SK-N-SH (cell line): ENCODE measurements at regions of chr5 and their contacts with region 1.

Region 1: GRCh38 chr5:38420691-38421390 is 135.6 kb downstream of the LIFR start:
- DNase-seq: peak; percentile 67
- H3K4me3 ChIP-seq: no peak overlapping the region
- H3K27ac ChIP-seq: no peak overlapping the region
- H3K4me1 ChIP-seq: peaks cover 3 to 7% of the 10 kb centered on the region in 2 experiments; a peak in 1 of 4 replicates
- H3K27me3 ChIP-seq: no peaks in the 10 kb centered on the region
- CTCF ChIP-seq: peak; percentile 86
- EP300 ChIP-seq: no peak
- RAD21 ChIP-seq: peak; percentile 79

Region 2: GRCh38 chr5:38078161-38078560 is 342.7 kb before region 1 on chr5:
- CTCF ChIA-PET with region 1: no interaction called
- POLR2A ChIA-PET with region 1: no interaction called
- DNase-seq: no peak
- H3K4me3 ChIP-seq: no peak overlapping the region
- H3K27ac ChIP-seq: no peak overlapping the region
- H3K4me1 ChIP-seq: no peaks in the 10 kb centered on the region
- H3K27me3 ChIP-seq: peaks cover 4% of the 10 kb centered on the region; the same call in 1 of the 2 replicates
- CTCF ChIP-seq: no peak
- EP300 ChIP-seq: no peak
- RAD21 ChIP-seq: no peak

Region 3: DNA sequence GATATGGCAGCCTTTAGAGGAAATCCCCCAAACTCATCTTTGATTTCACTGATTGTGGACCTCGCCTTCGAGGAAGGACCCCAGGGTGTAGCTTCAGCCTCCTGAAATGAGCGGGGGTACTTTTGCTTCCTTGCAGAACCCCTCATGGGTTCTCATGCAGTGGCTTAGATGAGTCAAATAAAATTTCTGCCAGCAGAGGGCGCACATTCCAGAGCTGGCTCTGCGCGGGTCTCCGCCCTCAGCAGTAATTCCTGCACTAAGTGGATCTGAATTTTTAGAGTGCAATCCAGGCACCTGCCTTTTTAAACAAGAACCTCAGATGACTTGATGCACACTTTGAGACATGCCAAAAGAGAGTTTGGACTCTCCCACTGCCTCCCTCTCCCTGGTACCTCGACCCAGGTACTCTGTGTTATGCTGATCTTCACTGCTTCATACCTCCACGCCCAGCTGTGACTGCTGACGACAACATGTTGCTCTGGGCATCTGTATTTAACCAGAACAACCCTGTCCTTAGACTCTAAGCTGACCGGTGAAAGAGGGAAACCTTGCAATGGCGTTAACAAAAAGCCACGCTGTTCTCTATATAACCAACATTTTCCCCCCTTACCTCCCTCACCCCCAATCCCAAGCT is 155.2 kb before region 1 on chr5:
- CTCF ChIA-PET with region 1: interaction called, 11 read pairs
- POLR2A ChIA-PET with region 1: no interaction called
- DNase-seq: peak; percentile 67
- H3K4me3 ChIP-seq: peak overlapping the region in 1 of 2 experiments; percentile 41; a peak in 2 of 4 replicates
- H3K27ac ChIP-seq: no peak overlapping the region
- H3K4me1 ChIP-seq: peaks cover 0 to 6% of the 10 kb centered on the region in 2 experiments; a peak in 2 of 4 replicates
- H3K27me3 ChIP-seq: peaks cover 25% of the 10 kb centered on the region; the same call in 1 of the 2 replicates
- CTCF ChIP-seq: peak; percentile 83
- EP300 ChIP-seq: no peak
- RAD21 ChIP-seq: peak; percentile 65

Region 4: DNA sequence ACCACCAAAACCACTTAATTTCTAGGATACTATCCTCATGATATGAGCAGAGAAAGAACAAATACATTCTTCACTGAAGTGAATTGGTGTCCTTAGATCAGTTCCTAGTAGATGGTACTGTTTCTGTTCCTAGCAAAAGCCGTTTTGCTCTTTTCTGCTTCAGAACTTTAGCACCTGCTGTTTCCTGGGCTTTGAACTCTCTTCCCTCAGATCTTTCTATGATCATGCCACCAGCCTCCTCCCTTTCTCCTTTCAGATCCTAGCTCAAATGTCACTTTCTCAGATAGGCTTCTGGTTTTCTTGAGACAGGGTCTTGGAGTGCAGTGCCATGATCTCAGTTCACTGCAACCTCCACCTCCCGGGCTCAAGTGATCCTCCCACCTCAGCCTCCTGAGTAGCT is 44.4 kb before region 1 on chr5:
- CTCF ChIA-PET with region 1: no interaction called
- POLR2A ChIA-PET with region 1: no interaction called
- DNase-seq: no peak
- H3K4me3 ChIP-seq: no peak overlapping the region
- H3K27ac ChIP-seq: no peak overlapping the region
- H3K4me1 ChIP-seq: peaks cover 3 to 4% of the 10 kb centered on the region in 2 experiments; a peak in 2 of 4 replicates
- H3K27me3 ChIP-seq: peaks cover 18% of the 10 kb centered on the region; the same call in 1 of the 2 replicates
- CTCF ChIP-seq: no peak
- EP300 ChIP-seq: no peak
- RAD21 ChIP-seq: no peak

Region 5: DNA sequence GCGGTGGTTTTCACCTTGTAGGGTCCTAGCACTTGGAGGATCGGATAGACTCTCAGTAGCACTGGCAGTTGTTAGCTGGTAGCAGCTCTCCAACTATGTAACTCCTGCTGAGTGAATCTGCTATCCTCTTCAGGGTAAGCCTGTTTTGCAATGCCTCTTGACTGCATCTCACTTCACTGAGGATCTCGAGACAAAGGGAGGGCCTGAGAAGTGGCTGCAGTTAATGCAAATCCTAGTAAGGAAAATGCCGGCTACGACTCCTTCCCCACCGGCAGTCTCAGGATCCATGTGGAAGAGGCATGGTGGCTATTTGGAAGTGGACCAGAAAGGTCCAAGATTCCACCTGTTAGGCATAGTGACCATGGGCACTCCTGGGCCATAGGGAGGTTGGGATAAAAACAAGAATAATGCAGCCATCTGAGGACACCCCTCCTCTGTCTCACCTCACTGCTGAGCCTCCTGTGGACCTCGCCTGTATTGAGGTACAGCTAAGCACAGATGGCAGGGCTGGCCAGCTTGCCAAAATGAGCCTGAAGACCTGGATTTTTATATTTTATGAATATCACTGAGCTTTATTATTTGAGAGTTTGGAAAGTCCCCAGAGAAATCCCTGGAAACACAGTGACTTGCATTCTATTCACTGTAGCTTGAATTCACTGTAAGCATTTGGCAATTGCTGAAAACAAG is 10.4 kb before region 1 on chr5:
- CTCF ChIA-PET with region 1: interaction called, 19 read pairs
- POLR2A ChIA-PET with region 1: no interaction called
- DNase-seq: no peak
- H3K4me3 ChIP-seq: no peak overlapping the region
- H3K27ac ChIP-seq: no peak overlapping the region
- H3K4me1 ChIP-seq: no peaks in the 10 kb centered on the region
- H3K27me3 ChIP-seq: 0 out of 2 replicates have a peak, but pooled peaks cover 3% of the 10 kb centered on the region
- CTCF ChIP-seq: no peak
- EP300 ChIP-seq: no peak
- RAD21 ChIP-seq: no peak

Region 6: DNA sequence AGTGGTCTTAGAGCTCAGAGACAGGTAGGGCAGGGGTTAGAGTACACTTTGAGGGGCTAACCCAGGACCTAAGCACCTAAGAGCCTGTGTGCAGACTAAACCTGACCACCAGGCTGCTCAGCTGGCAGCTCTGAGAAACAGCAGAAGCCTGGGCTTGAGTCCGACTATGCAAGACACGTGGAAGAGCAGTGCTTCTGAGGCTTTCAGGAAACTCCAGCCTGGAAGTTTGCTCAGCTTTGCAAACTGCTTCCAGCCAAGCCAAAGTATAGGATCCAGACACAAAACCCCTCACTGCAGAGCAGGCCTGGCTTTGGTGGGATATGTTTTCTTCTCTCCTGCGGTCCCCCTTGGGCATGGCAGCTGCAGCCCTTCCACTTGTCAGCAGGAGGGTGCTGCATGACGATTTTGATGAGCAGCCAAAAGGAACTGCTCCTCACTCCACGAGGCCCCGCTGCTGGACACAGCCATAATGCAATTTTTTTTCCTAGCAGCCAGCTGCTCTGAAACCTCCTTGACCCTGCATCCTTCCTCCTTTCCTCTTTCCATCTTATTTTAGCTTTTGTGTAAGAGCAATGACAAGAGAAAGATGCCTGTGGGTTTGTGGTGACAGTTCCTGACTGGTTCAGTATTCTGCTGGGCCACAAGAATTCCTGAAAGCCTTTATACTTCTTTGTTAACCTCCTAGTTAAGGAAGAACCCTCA is 12.5 kb after region 1 on chr5:
- CTCF ChIA-PET with region 1: interaction called, 33 read pairs
- POLR2A ChIA-PET with region 1: no interaction called
- DNase-seq: no peak
- H3K4me3 ChIP-seq: no peak overlapping the region
- H3K27ac ChIP-seq: peak overlapping the region in 1 of 2 experiments; percentile 25; a peak in 1 of 4 replicates
- H3K4me1 ChIP-seq: peaks cover 10% of the 10 kb centered on the region in 2 experiments; a peak in 2 of 4 replicates
- H3K27me3 ChIP-seq: no peaks in the 10 kb centered on the region
- CTCF ChIP-seq: no peak
- EP300 ChIP-seq: no peak
- RAD21 ChIP-seq: no peak

Region 7: DNA sequence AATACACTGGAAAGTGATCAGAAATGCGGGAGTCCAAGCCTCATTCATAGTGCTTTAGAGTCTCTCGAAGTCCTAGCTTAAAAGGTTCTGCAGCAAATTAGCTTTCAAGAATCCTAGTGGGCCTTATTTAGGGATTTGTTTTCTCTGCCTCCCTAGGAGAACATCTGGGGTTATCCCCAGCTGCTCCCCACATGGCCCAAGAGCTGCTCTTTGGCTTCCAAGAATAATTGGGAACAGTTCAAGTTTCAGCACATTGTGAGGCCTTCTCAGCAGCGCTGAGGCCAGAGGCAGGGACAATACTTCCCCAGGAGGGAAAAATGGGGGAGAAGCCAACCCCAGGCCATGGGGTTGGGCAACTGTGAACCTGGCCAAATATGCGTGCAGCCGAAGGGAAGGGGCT is 26.9 kb after region 1 on chr5:
- CTCF ChIA-PET with region 1: interaction called, 104 read pairs
- POLR2A ChIA-PET with region 1: no interaction called
- DNase-seq: no peak
- H3K4me3 ChIP-seq: no peak overlapping the region
- H3K27ac ChIP-seq: no peak overlapping the region
- H3K4me1 ChIP-seq: peaks cover 0 to 5% of the 10 kb centered on the region in 2 experiments; a peak in 1 of 4 replicates
- H3K27me3 ChIP-seq: no peaks in the 10 kb centered on the region
- CTCF ChIP-seq: no peak
- EP300 ChIP-seq: no peak
- RAD21 ChIP-seq: no peak

Region 8: GRCh38 chr5:38553001-38553521 is 132.2 kb after region 1 on chr5:
- CTCF ChIA-PET with region 1: no interaction called
- POLR2A ChIA-PET with region 1: no interaction called
- DNase-seq: no peak
- H3K4me3 ChIP-seq: no peak overlapping the region
- H3K27ac ChIP-seq: no peak overlapping the region
- H3K4me1 ChIP-seq: peaks cover 0 to 14% of the 10 kb centered on the region in 2 experiments; a peak in 3 of 4 replicates
- H3K27me3 ChIP-seq: no peaks in the 10 kb centered on the region
- CTCF ChIP-seq: no peak
- EP300 ChIP-seq: no peak
- RAD21 ChIP-seq: no peak

Region 9: GRCh38 chr5:38816083-38817030 is 395.5 kb after region 1 on chr5:
- CTCF ChIA-PET with region 1: interaction called, 135 read pairs
- POLR2A ChIA-PET with region 1: no interaction called
- DNase-seq: peak; percentile 58
- H3K4me3 ChIP-seq: no peak overlapping the region
- H3K27ac ChIP-seq: peak overlapping the region in 1 of 2 experiments; percentile 55; a peak in 1 of 4 replicates
- H3K4me1 ChIP-seq: peaks cover 0 to 4% of the 10 kb centered on the region in 2 experiments; a peak in 2 of 4 replicates
- H3K27me3 ChIP-seq: no peaks in the 10 kb centered on the region
- CTCF ChIP-seq: no peak
- EP300 ChIP-seq: peak in 1 of 2 experiments; percentile 56; a peak in 2 of 4 replicates
- RAD21 ChIP-seq: no peak

Region 10: DNA sequence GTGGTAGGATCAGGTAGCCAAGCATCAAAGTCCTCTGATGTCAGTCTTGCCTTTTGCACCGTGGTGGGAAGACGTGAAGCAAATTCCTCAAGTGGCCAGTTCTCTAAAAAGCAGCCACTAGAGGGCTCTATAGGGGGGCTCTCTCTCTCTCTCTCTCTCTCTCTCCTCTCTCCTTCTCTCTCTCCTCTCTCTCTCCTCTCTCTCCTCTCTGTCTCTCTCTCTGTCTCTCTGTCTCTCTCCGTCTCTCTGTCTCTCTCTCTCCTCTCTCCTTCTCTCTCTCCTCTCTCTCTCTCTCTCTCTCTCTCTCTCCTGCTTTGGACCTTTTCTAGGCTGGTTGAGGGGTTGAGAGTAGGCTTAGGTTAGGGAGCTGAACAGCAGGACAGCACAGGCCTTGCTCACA is 411.1 kb after region 1 on chr5:
- CTCF ChIA-PET with region 1: interaction called, 10 read pairs
- POLR2A ChIA-PET with region 1: no interaction called
- DNase-seq: peak; percentile 40
- H3K4me3 ChIP-seq: no peak overlapping the region
- H3K27ac ChIP-seq: no peak overlapping the region
- H3K4me1 ChIP-seq: peaks cover 0 to 16% of the 10 kb centered on the region in 2 experiments; a peak in 1 of 4 replicates
- H3K27me3 ChIP-seq: no peaks in the 10 kb centered on the region
- CTCF ChIP-seq: peak; percentile 52
- EP300 ChIP-seq: no peak
- RAD21 ChIP-seq: peak; percentile 31